ENCODE measurements at regions of chr4 and their contacts with region 1.

Region 1: GRCh38 chr4:164779811-164780216 is 25.9 kb downstream of the SMIM31 start:
- DNase-seq: peak; percentile 7 to 42 (median 18)
- ATAC-seq: peak; percentile 73; the same call in 2 of the 3 replicates
- H3K4me3 ChIP-seq: no peak overlapping the region
- H3K27ac ChIP-seq: no peak overlapping the region
- H3K4me1 ChIP-seq: no peaks in the 10 kb centered on the region
- H3K27me3 ChIP-seq: no peaks in the 10 kb centered on the region; a peak in 1 of 5 replicates
- CTCF ChIP-seq: peak; percentile 70 to 82 (median 74)
- EP300 ChIP-seq: no peak
- POLR2A ChIP-seq: no peak
- RAD21 ChIP-seq: peak; percentile 61 to 63

Region 2: DNA sequence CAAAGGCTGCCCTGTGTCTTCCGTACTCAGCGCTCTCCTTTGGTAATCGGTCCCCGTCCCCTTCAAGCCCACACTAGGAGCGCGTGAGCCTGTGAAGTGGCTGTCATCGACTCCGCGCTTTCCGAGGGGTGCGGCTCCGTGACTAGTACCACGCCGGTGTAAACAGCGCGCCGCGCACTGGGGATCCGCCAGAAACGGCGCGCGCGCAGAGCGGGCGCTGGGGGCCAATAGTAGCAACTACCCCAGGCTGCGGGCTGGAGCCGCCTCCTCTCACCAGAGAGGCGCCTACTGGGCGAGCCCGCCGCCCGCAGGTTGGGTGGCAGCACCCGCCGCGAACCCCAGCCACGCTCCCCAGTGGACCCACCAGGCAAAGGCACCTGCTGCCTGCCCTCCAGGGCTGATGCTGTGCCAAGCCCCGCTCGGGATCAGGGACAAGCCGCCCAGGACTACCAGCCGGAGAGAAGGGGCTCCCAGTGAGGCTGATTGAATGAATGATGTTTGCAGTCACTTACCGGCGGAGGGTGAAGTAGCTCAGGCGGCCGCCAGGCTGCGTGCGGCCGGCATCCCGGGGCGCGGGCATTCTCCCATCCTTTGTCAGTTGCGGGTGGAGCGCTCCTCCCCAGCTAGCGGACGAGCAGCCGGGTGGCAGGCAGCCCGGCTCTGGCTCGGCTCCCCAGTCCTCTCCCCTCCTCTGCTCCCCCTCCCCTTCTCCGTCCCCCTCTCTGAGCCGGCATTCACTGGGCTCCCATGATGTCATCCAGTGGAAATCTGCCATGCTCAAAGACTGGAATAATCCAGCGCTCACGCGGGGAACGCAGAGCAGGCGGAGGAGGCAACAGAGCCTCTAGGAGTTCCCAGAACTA is 396.2 kb before region 1 on chr4:
- CTCF ChIA-PET with region 1: no interaction called
- POLR2A ChIA-PET with region 1: no interaction called
- in situ Hi-C with region 1: no loop called
- intact Hi-C with region 1: no loop called
- DNase-seq: no peak
- ATAC-seq: no peak
- H3K4me3 ChIP-seq: no peak overlapping the region
- H3K27ac ChIP-seq: no peak overlapping the region
- H3K4me1 ChIP-seq: no peaks in the 10 kb centered on the region
- H3K27me3 ChIP-seq: no peaks in the 10 kb centered on the region
- CTCF ChIP-seq: no peak
- EP300 ChIP-seq: no peak
- POLR2A ChIP-seq: no peak
- RAD21 ChIP-seq: no peak

Region 3: DNA sequence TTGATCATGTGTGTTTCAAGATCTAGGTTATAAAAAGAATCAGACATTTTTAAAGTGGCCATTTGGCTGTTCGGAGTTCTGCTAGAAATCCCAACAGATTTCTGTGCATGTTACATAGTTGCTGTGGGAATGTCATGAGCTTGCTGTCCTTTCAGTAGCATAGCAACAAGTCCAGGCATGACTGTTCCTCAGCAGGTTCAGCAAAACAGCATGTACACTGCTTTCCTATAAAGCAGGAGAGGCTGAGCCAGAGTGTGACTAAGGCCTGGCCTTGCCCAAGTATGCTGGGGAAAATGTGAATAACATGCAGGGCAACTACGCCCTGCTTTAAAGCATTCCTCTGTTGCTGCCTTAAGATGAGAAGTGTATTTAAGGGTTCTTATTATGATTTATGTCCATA is 243.0 kb before region 1 on chr4:
- CTCF ChIA-PET with region 1: no interaction called
- POLR2A ChIA-PET with region 1: no interaction called
- in situ Hi-C with region 1: no loop called
- intact Hi-C with region 1: no loop called
- DNase-seq: no peak
- ATAC-seq: no peak
- H3K4me3 ChIP-seq: no peak overlapping the region
- H3K27ac ChIP-seq: no peak overlapping the region
- H3K4me1 ChIP-seq: no peaks in the 10 kb centered on the region
- H3K27me3 ChIP-seq: no peaks in the 10 kb centered on the region
- CTCF ChIP-seq: no peak
- EP300 ChIP-seq: no peak
- POLR2A ChIP-seq: no peak
- RAD21 ChIP-seq: no peak

Region 4: GRCh38 chr4:164997324-164997723 is 217.5 kb after region 1 on chr4:
- CTCF ChIA-PET with region 1: no interaction called
- POLR2A ChIA-PET with region 1: no interaction called
- in situ Hi-C with region 1: no loop called
- intact Hi-C with region 1: loop called (anchors 2 kb)
- DNase-seq: peak in 2 of 4 experiments; percentile 14 to 53
- ATAC-seq: peak; percentile 57
- H3K4me3 ChIP-seq: no peak overlapping the region
- H3K27ac ChIP-seq: no peak overlapping the region
- H3K4me1 ChIP-seq: no peaks in the 10 kb centered on the region
- H3K27me3 ChIP-seq: peaks cover 4 to 11% of the 10 kb centered on the region in 2 experiments; a peak in 3 of 5 replicates
- CTCF ChIP-seq: peak; percentile 41 to 60 (median 49); a peak in 4 of 6 replicates
- EP300 ChIP-seq: no peak
- POLR2A ChIP-seq: no peak
- RAD21 ChIP-seq: peak; percentile 30 to 54; a peak in 3 of 4 replicates

Region 5: GRCh38 chr4:165096776-165097175 is 317.0 kb after region 1 on chr4:
- CTCF ChIA-PET with region 1: no interaction called
- POLR2A ChIA-PET with region 1: no interaction called
- in situ Hi-C with region 1: loop called (anchors 10 kb)
- intact Hi-C with region 1: loop called (anchors 5 kb)
- DNase-seq: peak in 1 of 4 experiments; percentile 13
- ATAC-seq: peak; percentile 59; the same call in 1 of the 3 replicates
- H3K4me3 ChIP-seq: no peak overlapping the region
- H3K27ac ChIP-seq: no peak overlapping the region
- H3K4me1 ChIP-seq: no peaks in the 10 kb centered on the region
- H3K27me3 ChIP-seq: no peaks in the 10 kb centered on the region
- CTCF ChIP-seq: peak in 2 of 3 experiments; percentile 44 to 51; a peak in 3 of 6 replicates
- EP300 ChIP-seq: no peak
- POLR2A ChIP-seq: no peak
- RAD21 ChIP-seq: peak; percentile 15 to 27; a peak in 3 of 4 replicates

Region 6: DNA sequence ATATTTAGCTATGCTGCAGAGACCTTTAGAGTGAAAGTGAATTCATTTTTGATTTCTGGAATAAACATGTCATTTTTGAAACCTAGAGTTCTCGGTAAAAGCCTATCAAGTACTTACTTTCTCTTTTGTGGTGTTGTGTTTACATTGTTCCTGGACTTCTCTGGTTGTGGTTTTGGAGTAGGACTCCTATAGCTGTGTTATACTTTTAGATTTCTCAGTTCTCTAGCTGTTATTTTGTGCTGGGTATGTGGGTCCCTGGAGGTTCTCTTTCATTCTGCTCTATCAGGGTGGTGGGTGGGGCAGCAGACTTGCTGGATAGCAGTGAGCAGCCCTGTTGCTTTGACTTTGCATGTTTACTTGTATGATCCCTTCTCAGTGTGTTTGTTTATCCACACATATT is 522.0 kb after region 1 on chr4:
- CTCF ChIA-PET with region 1: no interaction called
- POLR2A ChIA-PET with region 1: no interaction called
- in situ Hi-C with region 1: no loop called
- intact Hi-C with region 1: no loop called
- DNase-seq: peak in 1 of 4 experiments; percentile 15
- ATAC-seq: peak; percentile 78
- H3K4me3 ChIP-seq: no peak overlapping the region
- H3K27ac ChIP-seq: no peak overlapping the region
- H3K4me1 ChIP-seq: peaks cover 0 to 5% of the 10 kb centered on the region in 2 experiments; a peak in 2 of 5 replicates
- H3K27me3 ChIP-seq: no peaks in the 10 kb centered on the region
- CTCF ChIP-seq: no peak
- EP300 ChIP-seq: no peak
- POLR2A ChIP-seq: no peak
- RAD21 ChIP-seq: no peak

Region 7: DNA sequence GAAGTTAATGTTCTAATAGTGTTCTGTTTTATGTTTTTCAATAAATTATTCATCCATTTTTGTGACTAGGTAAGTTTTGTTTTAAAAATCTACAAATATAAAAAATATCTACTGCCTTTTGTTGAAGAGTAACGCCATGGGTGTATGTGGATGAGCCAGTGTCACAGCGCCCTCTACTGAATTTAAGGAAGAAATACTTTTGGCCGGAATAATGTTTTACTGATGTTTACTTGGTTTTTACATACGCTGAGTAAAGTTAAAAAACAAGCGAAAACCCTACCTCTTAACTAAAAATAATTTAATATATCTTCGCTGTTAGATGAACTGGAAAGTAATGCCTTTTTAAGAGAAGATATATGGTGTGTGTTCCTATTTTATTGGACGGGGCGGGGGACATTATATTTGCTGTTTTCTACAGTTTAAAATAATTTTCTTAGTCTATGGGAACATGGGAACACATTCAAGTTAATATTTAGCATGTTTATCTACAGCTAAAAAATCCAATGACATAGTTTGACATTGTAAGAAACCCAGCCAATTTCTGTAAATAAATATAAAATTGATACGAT is 685.1 kb after region 1 on chr4:
- CTCF ChIA-PET with region 1: no interaction called
- POLR2A ChIA-PET with region 1: no interaction called
- in situ Hi-C with region 1: loop called (anchors 10 kb)
- intact Hi-C with region 1: no loop called
- DNase-seq: peak; percentile 60 to 66 (median 62)
- ATAC-seq: peak; percentile 75
- H3K4me3 ChIP-seq: no peak overlapping the region
- H3K27ac ChIP-seq: no peak overlapping the region
- H3K4me1 ChIP-seq: peaks cover 0 to 4% of the 10 kb centered on the region in 2 experiments; a peak in 2 of 5 replicates
- H3K27me3 ChIP-seq: no peaks in the 10 kb centered on the region
- CTCF ChIP-seq: peak; percentile 66 to 90 (median 70)
- EP300 ChIP-seq: no peak
- POLR2A ChIP-seq: no peak
- RAD21 ChIP-seq: peak; percentile 85 to 93